ENCODE measurements at regions of chr13 and their contacts with region 1.

Region 1: GRCh38 chr13:79604752-79605151 is 123.8 kb downstream of the NDFIP2 start:
- DNase-seq: no peak
- H3K4me3 ChIP-seq: no peak overlapping the region
- H3K27ac ChIP-seq: no peak overlapping the region
- H3K4me1 ChIP-seq: no peaks in the 10 kb centered on the region
- H3K27me3 ChIP-seq: no peaks in the 10 kb centered on the region
- CTCF ChIP-seq: no peak
- EP300 ChIP-seq: no peak
- POLR2A ChIP-seq: no peak

Region 2: DNA sequence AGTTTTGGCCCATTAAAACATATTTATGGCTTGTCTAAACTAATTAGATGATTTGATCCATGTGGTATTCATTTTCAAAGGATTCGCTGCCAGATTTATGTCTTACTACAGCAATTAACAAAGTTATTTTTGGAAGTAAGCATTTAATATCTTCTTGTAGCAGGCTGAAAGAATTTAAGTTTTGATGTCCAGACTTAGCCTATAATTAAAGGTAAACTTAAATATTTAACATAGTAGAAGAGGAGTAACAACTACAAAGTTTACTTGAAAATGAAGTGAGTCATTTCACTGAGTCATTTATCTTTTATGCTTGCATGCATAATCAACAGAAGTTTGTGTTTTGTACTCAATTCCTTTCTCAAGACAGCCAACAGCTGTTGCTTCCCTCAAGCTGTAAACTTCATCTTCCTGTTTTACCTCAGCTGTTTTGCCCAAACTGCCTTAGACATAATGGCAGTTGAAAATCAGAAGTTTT is 1744.2 kb before region 1 on chr13:
- in situ Hi-C with region 1: no loop called
- intact Hi-C with region 1: loop called (anchors 5 kb)
- DNase-seq: no peak
- H3K4me3 ChIP-seq: no peak overlapping the region
- H3K27ac ChIP-seq: peak overlapping the region; percentile 30 to 68 (median 52)
- H3K4me1 ChIP-seq: peaks cover 0 to 5% (median 0%) of the 10 kb centered on the region in 4 donors
- H3K27me3 ChIP-seq: no peaks in the 10 kb centered on the region
- CTCF ChIP-seq: no peak
- EP300 ChIP-seq: no peak
- POLR2A ChIP-seq: no peak